ENCODE measurements at regions of chr2 and their contacts with region 1.

Region 1: GRCh38 chr2:100924520-100925451 is 77.3 kb upstream of the RPL31 start:
- DNase-seq: peak in 11 of 14 experiments; percentile 8 to 66 (median 22)
- ATAC-seq: peak; percentile 79
- H3K4me3 ChIP-seq: peak overlapping the region; percentile 45
- H3K4me3 Mint-ChIP-seq: peak overlapping the region; percentile 61
- H3K27ac ChIP-seq: peak overlapping the region in 1 of 2 donors; percentile 66
- H3K27ac Mint-ChIP-seq: peak overlapping the region; percentile 82
- H3K4me1 ChIP-seq: peaks cover 18% of the 10 kb centered on the region
- H3K4me1 Mint-ChIP-seq: peaks cover 14% of the 10 kb centered on the region
- H3K27me3 ChIP-seq: no peaks in the 10 kb centered on the region
- H3K27me3 Mint-ChIP-seq: no peaks in the 10 kb centered on the region
- CTCF ChIP-seq: no peak

Region 2: GRCh38 chr2:100941646-100942240 is 17.0 kb after region 1 on chr2:
- CTCF ChIA-PET with region 1: no interaction called
- POLR2A ChIA-PET with region 1: interaction called, 13 read pairs
- intact Hi-C with region 1: no loop called
- DNase-seq: peak in 2 of 14 experiments; percentile 13 to 35
- ATAC-seq: peak; percentile 59
- H3K4me3 ChIP-seq: peak overlapping the region; percentile 35
- H3K4me3 Mint-ChIP-seq: peak overlapping the region; percentile 65
- H3K27ac ChIP-seq: no peak overlapping the region
- H3K27ac Mint-ChIP-seq: peak overlapping the region; percentile 80
- H3K4me1 ChIP-seq: peaks cover 22% of the 10 kb centered on the region
- H3K4me1 Mint-ChIP-seq: peaks cover 28% of the 10 kb centered on the region
- H3K27me3 ChIP-seq: no peaks in the 10 kb centered on the region
- H3K27me3 Mint-ChIP-seq: peaks cover 5% of the 10 kb centered on the region
- CTCF ChIP-seq: no peak

Region 3: GRCh38 chr2:101120172-101120996 is 195.6 kb after region 1 on chr2:
- CTCF ChIA-PET with region 1: no interaction called
- POLR2A ChIA-PET with region 1: no interaction called
- intact Hi-C with region 1: no loop called
- DNase-seq: peak in 1 of 14 experiments; percentile 34
- ATAC-seq: no peak
- H3K4me3 ChIP-seq: no peak overlapping the region
- H3K4me3 Mint-ChIP-seq: no peak overlapping the region
- H3K27ac ChIP-seq: no peak overlapping the region
- H3K27ac Mint-ChIP-seq: no peak overlapping the region
- H3K4me1 ChIP-seq: no peaks in the 10 kb centered on the region
- H3K4me1 Mint-ChIP-seq: peaks cover 13% of the 10 kb centered on the region
- H3K27me3 ChIP-seq: no peaks in the 10 kb centered on the region
- H3K27me3 Mint-ChIP-seq: no peaks in the 10 kb centered on the region
- CTCF ChIP-seq: no peak